Activated naive CD4-positive, alpha-beta T cell treated with anti-CD3 and anti-CD28 coated beads for 36 hours (primary cell): ENCODE measurements at regions of chr3 and their contacts with region 1.

Region 1: GRCh38 chr3:59386165-59386564 is 336.3 kb upstream of the CFAP20DC start:
- DNase-seq: peak; percentile 24
- H3K4me3 Mint-ChIP-seq: no peak overlapping the region
- H3K27ac Mint-ChIP-seq: peak overlapping the region; percentile 63
- H3K4me1 Mint-ChIP-seq: peaks cover 70% of the 10 kb centered on the region
- H3K27me3 Mint-ChIP-seq: no peaks in the 10 kb centered on the region

Region 2: DNA sequence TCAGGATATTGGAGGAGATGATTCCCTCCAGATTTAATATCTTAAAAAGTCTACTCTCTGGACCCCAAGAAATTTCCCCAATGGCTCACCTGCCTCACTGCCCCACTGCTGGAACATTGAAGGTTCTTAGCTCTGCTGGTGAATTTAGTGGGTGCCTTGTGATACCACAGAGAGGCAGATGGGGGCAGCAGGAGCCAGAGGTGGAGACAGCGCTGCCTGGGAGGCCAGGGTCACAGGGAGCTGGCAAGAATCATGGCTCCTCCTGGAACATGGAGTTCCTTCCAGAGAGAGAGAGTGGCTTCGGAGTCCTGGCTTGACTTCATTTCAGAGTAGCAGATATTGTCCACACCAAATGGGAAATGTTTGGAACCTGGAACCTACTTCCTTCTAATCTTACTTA is 72.8 kb before region 1 on chr3:
- CTCF ChIA-PET with region 1: interaction called, 7 read pairs
- intact Hi-C with region 1: loop called (anchors 5 kb)
- DNase-seq: peak; percentile 74
- H3K4me3 Mint-ChIP-seq: no peak overlapping the region
- H3K27ac Mint-ChIP-seq: no peak overlapping the region
- H3K4me1 Mint-ChIP-seq: peaks cover 22% of the 10 kb centered on the region
- H3K27me3 Mint-ChIP-seq: no peaks in the 10 kb centered on the region

Region 3: GRCh38 chr3:59456852-59457485 is 70.8 kb after region 1 on chr3:
- CTCF ChIA-PET with region 1: no interaction called
- intact Hi-C with region 1: loop called (anchors 1 kb)
- DNase-seq: peak; percentile 73
- H3K4me3 Mint-ChIP-seq: no peak overlapping the region
- H3K27ac Mint-ChIP-seq: peak overlapping the region; percentile 21
- H3K4me1 Mint-ChIP-seq: peaks cover 30% of the 10 kb centered on the region
- H3K27me3 Mint-ChIP-seq: no peaks in the 10 kb centered on the region

Region 4: DNA sequence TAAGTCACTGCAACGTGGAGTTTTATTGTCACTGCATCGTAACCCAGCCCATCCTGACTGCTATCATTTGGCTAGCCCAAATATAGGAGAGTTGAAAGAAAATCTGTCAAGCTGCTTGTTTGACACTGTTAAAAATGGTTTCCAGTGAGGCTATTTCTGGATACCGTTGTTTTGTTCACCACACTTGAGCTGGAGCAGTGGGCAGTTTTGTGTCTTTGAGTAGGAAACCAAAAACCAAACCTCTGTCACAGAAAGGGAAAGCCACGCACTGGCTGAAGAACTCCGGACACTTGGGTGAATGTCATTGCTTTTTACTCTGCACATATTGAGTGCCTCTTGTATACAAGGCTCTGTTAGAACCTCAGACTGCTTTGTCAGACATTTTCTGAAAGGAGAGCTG is 110.1 kb after region 1 on chr3:
- CTCF ChIA-PET with region 1: no interaction called
- intact Hi-C with region 1: no loop called
- DNase-seq: no peak
- H3K4me3 Mint-ChIP-seq: no peak overlapping the region
- H3K27ac Mint-ChIP-seq: no peak overlapping the region
- H3K4me1 Mint-ChIP-seq: no peaks in the 10 kb centered on the region
- H3K27me3 Mint-ChIP-seq: no peaks in the 10 kb centered on the region

Region 5: DNA sequence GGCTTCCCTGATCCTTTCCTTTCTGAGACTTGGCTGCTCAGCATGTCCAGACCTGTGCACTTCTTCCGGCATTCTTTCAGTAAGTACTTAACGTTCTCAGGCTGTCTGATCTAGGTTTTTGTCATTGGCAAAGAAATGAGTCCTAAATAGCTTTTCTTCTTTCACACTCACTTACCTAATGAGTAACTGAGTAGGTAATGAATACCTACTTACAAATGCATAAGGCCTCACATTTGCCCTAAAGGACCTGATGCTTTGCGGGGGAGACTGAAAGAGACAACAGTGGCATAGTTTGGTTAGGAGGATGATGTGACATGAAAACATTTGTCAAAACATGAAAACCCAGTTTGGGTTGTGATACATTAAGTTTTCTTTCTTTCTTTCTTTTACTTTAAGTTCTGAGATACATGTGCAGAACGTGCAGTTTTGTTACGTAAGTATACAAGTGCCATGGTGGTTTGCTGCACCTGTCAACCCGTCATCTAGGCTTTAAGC is 180.4 kb after region 1 on chr3:
- CTCF ChIA-PET with region 1: interaction called, 3 read pairs
- intact Hi-C with region 1: loop called (anchors 1 kb)
- DNase-seq: peak; percentile 43
- H3K4me3 Mint-ChIP-seq: no peak overlapping the region
- H3K27ac Mint-ChIP-seq: peak overlapping the region; percentile 7
- H3K4me1 Mint-ChIP-seq: peaks cover 15% of the 10 kb centered on the region
- H3K27me3 Mint-ChIP-seq: no peaks in the 10 kb centered on the region

Region 6: GRCh38 chr3:59998058-59998457 is 611.9 kb after region 1 on chr3:
- CTCF ChIA-PET with region 1: no interaction called
- intact Hi-C with region 1: loop called (anchors 5 kb)
- DNase-seq: no peak
- H3K4me3 Mint-ChIP-seq: no peak overlapping the region
- H3K27ac Mint-ChIP-seq: peak overlapping the region; percentile 8
- H3K4me1 Mint-ChIP-seq: peaks cover 90% of the 10 kb centered on the region
- H3K27me3 Mint-ChIP-seq: no peaks in the 10 kb centered on the region

Region 7: GRCh38 chr3:60365360-60365759 is 979.2 kb after region 1 on chr3:
- CTCF ChIA-PET with region 1: no interaction called
- intact Hi-C with region 1: loop called (anchors 2 kb)
- DNase-seq: no peak
- H3K4me3 Mint-ChIP-seq: no peak overlapping the region
- H3K27ac Mint-ChIP-seq: no peak overlapping the region
- H3K4me1 Mint-ChIP-seq: peaks cover 28% of the 10 kb centered on the region
- H3K27me3 Mint-ChIP-seq: peaks cover 2% of the 10 kb centered on the region